Vagina (tissue), 2 donors: ENCODE measurements at regions of chr4 and their contacts with region 1.

Region 1: DNA sequence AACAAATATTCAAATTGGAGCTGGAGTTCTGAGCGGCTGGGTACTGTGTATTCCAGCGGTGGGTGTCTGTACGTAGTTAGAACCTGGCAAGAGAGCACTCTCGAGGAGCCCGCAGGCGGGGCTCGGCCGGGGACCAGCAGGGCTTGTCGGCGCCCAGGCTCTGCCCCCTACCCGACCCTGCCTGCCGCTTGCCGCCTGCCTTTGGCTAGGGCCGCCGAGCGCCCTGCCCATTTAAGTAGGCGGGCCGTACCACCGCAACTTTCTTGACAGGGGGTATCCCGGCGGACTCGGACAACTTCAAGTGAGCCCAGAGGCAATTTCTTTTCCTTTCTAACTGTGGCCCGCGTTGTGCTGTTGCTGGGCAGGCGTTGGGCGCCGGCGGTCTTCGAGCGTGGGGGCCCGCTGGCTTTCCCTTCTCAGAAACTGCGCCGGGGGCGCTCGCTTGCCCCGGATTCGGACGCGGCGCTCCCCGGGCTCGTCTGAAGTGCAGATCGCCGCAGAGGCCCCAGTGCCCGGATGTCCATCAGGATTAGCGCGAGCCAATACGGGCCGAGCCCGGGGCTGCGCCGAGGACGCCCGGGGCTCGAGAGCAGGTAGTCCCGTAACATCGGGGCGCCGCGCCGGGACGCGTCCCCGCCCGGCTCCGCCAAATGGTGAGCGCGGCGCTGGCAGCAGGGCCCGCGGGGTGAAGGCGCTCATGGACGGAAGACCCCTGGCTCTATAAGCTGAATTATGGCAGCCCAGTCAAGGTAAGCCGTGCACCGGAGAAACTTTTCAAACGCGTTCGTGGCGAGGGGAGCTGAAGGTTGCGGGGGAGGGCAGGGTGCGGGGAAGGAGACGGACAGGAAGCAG is 72.1 kb downstream of the AFF1 start:
- DNase-seq: peak in 1 of 2 donors; percentile 96
- H3K4me3 ChIP-seq: peak overlapping the region; percentile 83 to 91
- H3K27ac ChIP-seq: peak overlapping the region; percentile 96
- H3K4me1 ChIP-seq: peaks cover 52% of the 10 kb centered on the region
- H3K27me3 ChIP-seq: no peaks in the 10 kb centered on the region
- CTCF ChIP-seq: no peak
- POLR2A ChIP-seq: peak in 1 of 2 donors; percentile 88

Region 2: GRCh38 chr4:86934771-86935565 is 71.9 kb before region 1 on chr4 and contains the start of gene AFF1:
- intact Hi-C with region 1: loop called (anchors 2 kb)
- DNase-seq: peak in 1 of 2 donors; percentile 95
- H3K4me3 ChIP-seq: peak within 1 kb of the TSS; percentile 69 to 99
- H3K27ac ChIP-seq: peak within 1 kb of the TSS; percentile 99
- H3K4me1 ChIP-seq: peaks cover 43% of the 10 kb centered on the region
- H3K27me3 ChIP-seq: no peaks in the 10 kb centered on the region
- CTCF ChIP-seq: peak in 1 of 3 experiments; percentile 21
- POLR2A ChIP-seq: peak in 1 of 2 donors; percentile 89
- total RNA-seq, gene AFF1: 99.9 TPM

Region 3: GRCh38 chr4:87043044-87043820 is 36.3 kb after region 1 on chr4:
- intact Hi-C with region 1: loop called (anchors 5 kb)
- DNase-seq: no peak
- H3K4me3 ChIP-seq: no peak overlapping the region
- H3K27ac ChIP-seq: peak overlapping the region; percentile 84
- H3K4me1 ChIP-seq: peaks cover 87% of the 10 kb centered on the region
- H3K27me3 ChIP-seq: no peaks in the 10 kb centered on the region
- CTCF ChIP-seq: no peak
- POLR2A ChIP-seq: no peak

Region 4: GRCh38 chr4:87087420-87087819 is 80.5 kb after region 1 on chr4:
- intact Hi-C with region 1: loop called (anchors 10 kb)
- DNase-seq: no peak
- H3K4me3 ChIP-seq: no peak overlapping the region
- H3K27ac ChIP-seq: no peak overlapping the region
- H3K4me1 ChIP-seq: peaks cover 64% of the 10 kb centered on the region
- H3K27me3 ChIP-seq: no peaks in the 10 kb centered on the region
- CTCF ChIP-seq: no peak
- POLR2A ChIP-seq: no peak

Region 5: DNA sequence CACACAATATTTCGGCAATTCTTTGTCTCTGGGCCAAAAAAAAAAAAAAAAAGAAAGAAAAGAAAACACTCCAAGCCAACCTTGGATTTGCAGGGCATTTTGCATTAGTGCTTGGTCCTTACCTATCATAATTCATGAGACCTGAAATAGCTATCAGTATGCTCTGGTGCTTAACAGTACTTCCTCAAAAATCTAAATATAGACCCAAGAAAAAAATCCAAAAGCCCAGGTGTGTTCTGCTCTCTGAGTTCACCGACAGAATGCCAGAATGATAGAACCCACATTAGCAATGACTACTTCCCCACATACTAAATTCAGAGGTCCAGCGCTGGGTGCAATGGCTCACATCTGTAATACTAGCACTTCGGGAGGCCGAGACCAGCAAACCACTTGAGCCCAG is 1108.7 kb after region 1 on chr4:
- intact Hi-C with region 1: no loop called
- DNase-seq: no peak
- H3K4me3 ChIP-seq: no peak overlapping the region
- H3K27ac ChIP-seq: no peak overlapping the region
- H3K4me1 ChIP-seq: no peaks in the 10 kb centered on the region
- H3K27me3 ChIP-seq: no peaks in the 10 kb centered on the region
- CTCF ChIP-seq: no peak
- POLR2A ChIP-seq: no peak